ENCODE measurements at regions of chr7 and their contacts with region 1.

Region 1: DNA sequence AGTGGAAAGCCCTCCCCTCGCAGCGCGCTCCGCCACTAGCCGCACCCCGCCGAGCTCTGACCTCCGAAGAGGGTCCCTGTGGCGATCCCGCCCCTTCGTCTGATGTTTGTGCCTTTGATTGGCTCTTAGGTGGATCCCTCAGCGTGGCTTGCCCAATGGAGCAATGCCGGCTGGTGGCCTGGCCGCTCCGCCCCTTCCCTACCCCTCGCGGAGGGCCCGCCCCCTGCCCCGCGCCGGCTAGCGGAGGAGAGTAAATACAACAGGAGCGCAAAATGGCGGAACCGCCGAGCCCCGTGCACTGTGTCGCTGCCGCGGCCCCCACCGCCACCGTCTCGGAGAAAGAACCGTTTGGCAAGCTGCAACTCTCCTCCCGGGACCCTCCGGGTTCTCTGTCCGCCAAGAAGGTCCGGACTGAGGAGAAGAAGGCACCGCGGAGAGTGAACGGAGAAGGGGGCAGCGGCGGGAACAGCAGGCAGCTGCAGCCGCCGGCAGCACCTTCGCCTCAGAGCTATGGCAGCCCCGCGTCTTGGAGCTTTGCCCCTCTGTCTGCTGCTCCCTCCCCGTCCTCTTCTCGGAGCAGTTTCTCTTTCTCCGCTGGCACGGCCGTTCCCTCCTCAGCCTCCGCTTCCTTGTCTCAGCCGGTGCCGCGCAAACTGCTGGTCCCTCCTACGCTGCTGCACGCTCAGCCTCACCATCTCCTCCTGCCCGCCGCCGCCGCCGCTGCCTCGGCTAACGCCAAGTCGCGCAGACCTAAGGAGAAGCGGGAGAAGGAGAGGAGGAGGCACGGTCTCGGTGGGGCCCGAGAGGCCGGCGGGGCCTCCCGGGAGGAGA is at the start of gene RSBN1L:
- DNase-seq: peak; percentile 98
- H3K4me3 ChIP-seq: peak within 1 kb of the TSS; percentile 99
- H3K27ac ChIP-seq: peak within 1 kb of the TSS; percentile 85
- H3K4me1 ChIP-seq: peaks cover 29% of the 10 kb centered on the region
- CTCF ChIP-seq: 0 out of 2 replicates have a peak, but pooled peaks have one; percentile 31
- total RNA-seq, gene RSBN1L: 23.3 and 27.4 TPM in 2 replicates

Region 2: GRCh38 chr7:77649716-77650349 is 46.6 kb before region 1 on chr7:
- CTCF ChIA-PET with region 1: no interaction called
- POLR2A ChIA-PET with region 1: no interaction called
- intact Hi-C with region 1: no loop called
- DNase-seq: no peak
- H3K4me3 ChIP-seq: no peak overlapping the region
- H3K27ac ChIP-seq: no peak overlapping the region
- H3K4me1 ChIP-seq: no peaks in the 10 kb centered on the region
- CTCF ChIP-seq: no peak

Region 3: GRCh38 chr7:77923419-77923818 is 227.0 kb after region 1 on chr7:
- CTCF ChIA-PET with region 1: no interaction called
- POLR2A ChIA-PET with region 1: interaction called, 4 read pairs
- intact Hi-C with region 1: loop called (anchors 5 kb)
- DNase-seq: no peak
- H3K4me3 ChIP-seq: no peak overlapping the region
- H3K27ac ChIP-seq: peak overlapping the region; percentile 42
- H3K4me1 ChIP-seq: peaks cover 43% of the 10 kb centered on the region
- CTCF ChIP-seq: no peak